Activated CD4-positive, alpha-beta T cell treated with anti-CD3 and anti-CD28 coated beads for 36 hours (primary cell): ENCODE measurements at regions of chr7 and their contacts with region 1.

Region 1: DNA sequence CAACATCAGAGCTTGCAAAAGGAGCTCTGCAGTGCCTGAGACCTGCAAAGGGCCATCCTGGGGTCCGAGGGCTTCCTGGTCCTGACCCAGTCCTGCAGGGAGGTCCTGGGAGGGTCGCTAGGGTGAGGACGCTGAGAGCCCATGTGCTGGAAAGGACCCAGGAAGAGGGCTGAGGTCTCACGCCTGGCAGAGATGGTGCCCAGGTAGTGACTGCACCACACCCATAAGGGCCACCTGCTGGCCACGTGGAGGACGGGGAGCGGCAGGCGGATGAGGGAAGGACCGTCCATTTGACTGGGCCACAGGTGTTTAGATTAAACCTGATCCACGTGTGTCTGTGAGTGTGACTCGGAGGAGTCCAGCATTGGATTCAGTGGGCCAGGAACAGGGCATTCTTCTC is 392.8 kb downstream of the DNAJB6 start:
- DNase-seq: no peak
- ATAC-seq: no peak
- H3K4me3 Mint-ChIP-seq: no peak overlapping the region
- H3K27ac Mint-ChIP-seq: no peak overlapping the region
- H3K4me1 Mint-ChIP-seq: no peaks in the 10 kb centered on the region
- H3K27me3 Mint-ChIP-seq: no peaks in the 10 kb centered on the region

Region 2: GRCh38 chr7:157875230-157876179 is 145.9 kb after region 1 on chr7:
- CTCF ChIA-PET with region 1: no interaction called
- POLR2A ChIA-PET with region 1: no interaction called
- intact Hi-C with region 1: loop called in 1 of 2 experiments (anchors 10 kb)
- DNase-seq: peak; percentile 76
- ATAC-seq: peak; percentile 83
- H3K4me3 Mint-ChIP-seq: peak overlapping the region; percentile 57
- H3K27ac Mint-ChIP-seq: peak overlapping the region; percentile 2
- H3K4me1 Mint-ChIP-seq: peaks cover 29% of the 10 kb centered on the region
- H3K27me3 Mint-ChIP-seq: peaks cover 2% of the 10 kb centered on the region